Calu3 (cell line): ENCODE measurements at regions of chr7 and their contacts with region 1.

Region 1: GRCh38 chr7:133853706-133854276 is 273.3 kb upstream of the LRGUK start:
- DNase-seq: peak; percentile 89
- H3K4me3 Mint-ChIP-seq: peak overlapping the region; percentile 63
- H3K27ac Mint-ChIP-seq: peak overlapping the region; percentile 99
- H3K4me1 Mint-ChIP-seq: peaks cover 44% of the 10 kb centered on the region
- H3K27me3 Mint-ChIP-seq: no peaks in the 10 kb centered on the region
- CTCF ChIP-seq: peak; percentile 76

Region 2: GRCh38 chr7:133545613-133546012 is 308.2 kb before region 1 on chr7:
- CTCF ChIA-PET with region 1: no interaction called
- intact Hi-C with region 1: loop called (anchors 10 kb)
- DNase-seq: peak; percentile 5
- H3K4me3 Mint-ChIP-seq: no peak overlapping the region
- H3K27ac Mint-ChIP-seq: no peak overlapping the region
- H3K4me1 Mint-ChIP-seq: peaks cover 40% of the 10 kb centered on the region
- H3K27me3 Mint-ChIP-seq: no peaks in the 10 kb centered on the region
- CTCF ChIP-seq: no peak

Region 3: GRCh38 chr7:133633062-133633461 is 220.7 kb before region 1 on chr7:
- CTCF ChIA-PET with region 1: no interaction called
- intact Hi-C with region 1: loop called (anchors 10 kb)
- DNase-seq: peak; percentile 5
- H3K4me3 Mint-ChIP-seq: no peak overlapping the region
- H3K27ac Mint-ChIP-seq: peak overlapping the region; percentile 54
- H3K4me1 Mint-ChIP-seq: peaks cover 17% of the 10 kb centered on the region
- H3K27me3 Mint-ChIP-seq: no peaks in the 10 kb centered on the region
- CTCF ChIP-seq: no peak

Region 4: DNA sequence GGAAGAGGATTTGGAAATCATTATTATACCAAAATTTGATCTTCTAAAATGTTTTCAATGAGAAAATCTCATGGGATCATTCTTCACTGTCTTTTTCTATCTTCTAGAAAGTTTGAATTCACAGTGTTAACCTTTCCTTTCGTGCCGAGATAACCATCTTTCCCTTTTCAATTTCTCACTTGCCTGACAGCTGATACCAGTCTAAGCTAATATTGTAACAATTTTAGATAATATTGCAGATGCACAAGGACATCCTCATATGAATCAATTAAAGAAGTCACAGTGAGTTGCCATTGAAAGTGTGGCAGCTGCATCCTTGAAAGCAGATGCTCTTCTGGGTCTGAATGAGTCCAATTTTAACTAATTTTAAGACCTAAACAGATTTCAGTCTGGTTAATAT is 133.8 kb after region 1 on chr7:
- CTCF ChIA-PET with region 1: no interaction called
- intact Hi-C with region 1: loop called (anchors 1 kb)
- DNase-seq: no peak
- H3K4me3 Mint-ChIP-seq: no peak overlapping the region
- H3K27ac Mint-ChIP-seq: no peak overlapping the region
- H3K4me1 Mint-ChIP-seq: no peaks in the 10 kb centered on the region
- H3K27me3 Mint-ChIP-seq: no peaks in the 10 kb centered on the region
- CTCF ChIP-seq: no peak

Region 5: GRCh38 chr7:134327896-134328295 is 474.1 kb after region 1 on chr7:
- CTCF ChIA-PET with region 1: no interaction called
- intact Hi-C with region 1: no loop called
- DNase-seq: peak; percentile 51
- H3K4me3 Mint-ChIP-seq: no peak overlapping the region
- H3K27ac Mint-ChIP-seq: no peak overlapping the region
- H3K4me1 Mint-ChIP-seq: no peaks in the 10 kb centered on the region
- H3K27me3 Mint-ChIP-seq: no peaks in the 10 kb centered on the region
- CTCF ChIP-seq: no peak